ENCODE measurements at regions of chr10 and their contacts with region 1.

Region 1: DNA sequence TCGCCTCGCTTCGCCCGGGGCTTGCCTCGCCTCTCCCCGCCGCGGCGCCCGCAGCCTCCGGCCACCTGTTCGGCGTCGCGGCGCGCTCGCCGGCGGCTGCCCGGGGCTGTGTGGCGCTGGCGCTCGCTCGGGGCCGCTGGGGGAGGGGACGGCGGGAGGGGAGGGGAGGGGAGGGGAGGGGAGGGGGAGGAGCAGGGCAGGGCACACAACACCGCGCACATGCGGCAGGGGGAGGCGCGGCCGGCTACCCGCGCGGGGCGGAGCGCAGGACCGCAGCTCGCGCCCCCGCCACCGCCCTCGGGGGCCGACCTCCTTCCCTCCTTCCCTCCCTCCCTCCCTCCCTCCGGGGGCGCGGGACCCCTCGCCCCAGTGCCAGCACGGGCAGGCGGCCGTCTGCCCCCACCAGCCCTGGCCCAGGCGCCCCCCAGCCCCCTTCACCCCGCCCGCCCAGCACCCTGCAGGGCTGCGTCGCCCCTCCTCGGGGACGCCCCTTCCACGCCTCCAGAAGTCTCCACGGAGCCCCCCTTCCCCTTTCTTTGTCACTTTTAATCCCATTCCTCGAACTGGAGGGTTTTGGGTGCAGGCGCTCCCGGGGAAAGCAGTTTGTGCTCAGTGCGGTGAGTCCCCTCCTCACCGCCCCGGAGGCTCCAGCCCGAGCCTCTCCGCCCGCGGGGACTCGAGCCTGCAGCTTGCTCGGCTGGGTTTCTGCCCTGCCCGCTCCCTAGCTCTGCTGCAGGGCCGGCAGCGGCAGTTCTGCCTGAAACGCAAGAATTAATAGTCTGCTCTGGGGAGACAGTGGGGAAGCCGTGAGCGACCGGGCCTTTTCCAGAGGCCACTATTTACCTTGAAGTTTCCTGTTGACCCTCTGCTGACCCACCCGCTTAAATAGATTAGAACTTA is at the start of gene PARD3:
- DNase-seq: no peak
- H3K4me3 ChIP-seq: peak within 1 kb of the TSS; percentile 72 to 87
- H3K27ac ChIP-seq: peak within 1 kb of the TSS; percentile 95
- H3K4me1 ChIP-seq: peaks cover 45% of the 10 kb centered on the region
- H3K27me3 ChIP-seq: no peaks in the 10 kb centered on the region
- CTCF ChIP-seq: no peak
- POLR2A ChIP-seq: no peak
- total RNA-seq, gene PARD3: 95.5 TPM

Region 2: GRCh38 chr10:34666008-34666705 is 149.3 kb before region 1 on chr10:
- intact Hi-C with region 1: loop called (anchors 10 kb)
- DNase-seq: no peak
- H3K4me3 ChIP-seq: no peak overlapping the region
- H3K27ac ChIP-seq: no peak overlapping the region
- H3K4me1 ChIP-seq: peaks cover 31% of the 10 kb centered on the region
- H3K27me3 ChIP-seq: no peaks in the 10 kb centered on the region
- CTCF ChIP-seq: peak; percentile 46 to 67 (median 52)
- POLR2A ChIP-seq: no peak